ENCODE measurements at regions of chr2 and their contacts with region 1.

Region 1: GRCh38 chr2:219206442-219207253 is at the start of gene ZFAND2B:
- DNase-seq: peak; percentile 85 to 99 (median 97)

Region 2: GRCh38 chr2:219160186-219161017 is 46.2 kb before region 1 on chr2 and contains the start of gene NHEJ1:
- intact Hi-C with region 1: loop called (anchors 5 kb)
- DNase-seq: peak; percentile 93 to 98 (median 96)

Region 3: GRCh38 chr2:219278655-219279516 is 72.2 kb after region 1 on chr2 and contains the start of gene DNAJB2:
- intact Hi-C with region 1: loop called (anchors 2 kb)
- DNase-seq: peak; percentile 98 to 100 (median 99)

Measured in head of caudate nucleus (tissue), 42 donors.